GM12878 (cell line): ENCODE measurements at regions of chr17 and their contacts with region 1.

Region 1: DNA sequence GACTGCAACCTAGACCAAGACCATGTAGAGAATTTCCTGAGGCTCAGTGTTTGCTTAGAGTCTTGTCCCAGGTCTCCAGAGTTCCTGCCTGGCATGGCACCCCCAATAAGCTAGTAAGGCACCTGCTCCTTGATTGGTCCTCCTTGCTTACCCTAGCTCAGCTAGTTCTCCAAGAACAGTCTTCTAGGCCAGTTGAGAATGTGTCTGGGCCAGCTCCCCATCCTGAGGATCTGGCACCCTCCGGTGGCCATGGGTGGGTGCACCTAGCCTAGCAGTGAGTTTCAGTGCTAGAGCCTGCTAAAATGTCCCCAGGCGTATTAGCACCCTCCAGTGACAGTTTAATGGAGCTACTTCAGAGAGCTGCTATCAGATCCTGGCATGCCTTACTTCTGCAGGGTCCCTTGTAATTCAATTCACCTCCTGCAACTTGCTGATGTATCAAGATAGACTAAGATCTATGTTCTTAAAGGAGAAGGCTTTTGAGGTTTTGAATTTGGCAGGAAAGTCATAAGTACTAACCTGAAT is 44.4 kb upstream of the MED13 start:
- DNase-seq: peak; percentile 77
- ATAC-seq: peak; percentile 100
- H3K4me3 ChIP-seq: no peak overlapping the region
- H3K27ac ChIP-seq: no peak overlapping the region
- H3K4me1 ChIP-seq: peaks cover 2% of the 10 kb centered on the region; the same call in 1 of the 2 replicates
- H3K27me3 ChIP-seq: no peaks in the 10 kb centered on the region; a peak in 1 of 4 replicates
- CTCF ChIP-seq: peak; percentile 97 to 100 (median 100); a peak in 5 of 6 replicates
- EP300 ChIP-seq: no peak
- POLR2A ChIP-seq: no peak
- RAD21 ChIP-seq: peak; percentile 100

Region 2: DNA sequence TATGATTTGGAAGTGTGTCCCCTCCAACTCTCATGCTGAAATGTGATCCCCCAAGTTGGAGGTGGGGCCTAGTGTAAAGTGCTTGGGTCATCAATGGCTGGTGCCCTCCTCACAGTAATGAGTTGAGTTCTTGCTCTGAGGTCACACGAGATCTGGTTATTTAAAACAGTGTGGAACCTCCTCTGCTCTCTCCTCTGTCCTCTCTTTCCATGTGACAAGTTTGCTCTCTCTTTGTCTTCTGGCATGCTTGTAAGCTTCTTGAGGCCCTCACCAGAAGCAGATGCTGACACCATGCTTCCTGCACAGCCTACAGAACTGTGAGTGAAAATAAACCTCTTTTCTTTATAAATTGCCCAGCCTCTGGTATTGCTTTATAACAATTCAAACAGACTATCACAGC is 266.0 kb before region 1 on chr17:
- CTCF ChIA-PET with region 1: interaction called, 18 read pairs
- POLR2A ChIA-PET with region 1: no interaction called
- RAD21 ChIA-PET with region 1: interaction called, 57 read pairs
- SMC1A ChIA-PET with region 1: interaction called, 24 read pairs
- in situ Hi-C with region 1: no loop called
- intact Hi-C with region 1: no loop called
- DNase-seq: no peak
- ATAC-seq: no peak
- H3K4me3 ChIP-seq: no peak overlapping the region
- H3K27ac ChIP-seq: no peak overlapping the region
- H3K4me1 ChIP-seq: no peaks in the 10 kb centered on the region
- H3K27me3 ChIP-seq: no peaks in the 10 kb centered on the region
- CTCF ChIP-seq: no peak
- EP300 ChIP-seq: no peak
- POLR2A ChIP-seq: no peak
- RAD21 ChIP-seq: no peak

Region 3: DNA sequence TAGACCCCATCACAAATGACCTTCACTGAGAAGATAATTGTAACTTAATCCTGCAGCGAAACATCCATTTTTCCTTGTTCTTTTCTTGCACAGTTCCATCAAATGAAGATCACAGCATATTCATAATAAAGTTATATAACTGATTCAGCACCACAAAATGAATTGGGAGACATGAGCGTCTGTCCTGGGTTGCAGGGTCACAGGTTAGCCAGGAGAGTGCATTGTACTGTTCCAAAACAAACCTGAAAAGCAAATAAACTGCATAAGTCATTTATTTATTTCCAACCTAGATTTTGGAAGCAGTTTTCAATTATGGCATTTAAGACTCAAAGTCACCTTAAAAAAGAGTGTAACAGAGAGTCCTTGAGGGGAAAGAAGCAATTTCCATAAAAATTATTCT is 163.1 kb before region 1 on chr17:
- CTCF ChIA-PET with region 1: interaction called, 21 read pairs
- POLR2A ChIA-PET with region 1: interaction called, 3 read pairs
- RAD21 ChIA-PET with region 1: interaction called, 17 read pairs
- SMC1A ChIA-PET with region 1: interaction called, 28 read pairs
- in situ Hi-C with region 1: no loop called
- intact Hi-C with region 1: no loop called
- DNase-seq: no peak
- ATAC-seq: no peak
- H3K4me3 ChIP-seq: no peak overlapping the region
- H3K27ac ChIP-seq: no peak overlapping the region
- H3K4me1 ChIP-seq: no peaks in the 10 kb centered on the region
- H3K27me3 ChIP-seq: no peaks in the 10 kb centered on the region
- CTCF ChIP-seq: no peak
- EP300 ChIP-seq: no peak
- POLR2A ChIP-seq: no peak
- RAD21 ChIP-seq: no peak

Region 4: DNA sequence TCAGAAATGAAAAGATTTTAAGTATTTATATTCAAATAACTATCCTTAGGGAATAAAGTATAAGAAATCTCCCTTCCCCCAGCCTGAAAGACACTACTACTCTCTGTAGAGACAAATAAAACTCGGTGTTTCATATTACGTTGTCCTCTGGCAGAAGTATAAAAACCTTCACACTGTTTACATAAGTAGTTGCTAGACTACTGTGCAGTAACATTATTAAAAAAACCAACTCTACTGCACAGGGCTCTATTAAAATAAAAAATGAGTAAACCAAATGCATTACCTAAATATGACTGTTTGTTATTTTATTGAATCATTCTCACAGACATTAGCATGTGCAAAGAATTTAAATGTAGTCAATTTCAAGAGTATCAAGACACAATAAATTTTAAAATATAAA is 111.8 kb before region 1 on chr17:
- CTCF ChIA-PET with region 1: interaction called, 16 read pairs
- POLR2A ChIA-PET with region 1: no interaction called
- RAD21 ChIA-PET with region 1: interaction called, 19 read pairs
- SMC1A ChIA-PET with region 1: interaction called, 14 read pairs
- in situ Hi-C with region 1: no loop called
- intact Hi-C with region 1: no loop called
- DNase-seq: no peak
- ATAC-seq: no peak
- H3K4me3 ChIP-seq: no peak overlapping the region
- H3K27ac ChIP-seq: no peak overlapping the region
- H3K4me1 ChIP-seq: no peaks in the 10 kb centered on the region
- H3K27me3 ChIP-seq: no peaks in the 10 kb centered on the region
- CTCF ChIP-seq: no peak
- EP300 ChIP-seq: no peak
- POLR2A ChIP-seq: no peak
- RAD21 ChIP-seq: no peak

Region 5: GRCh38 chr17:62052757-62053338 is 56.6 kb before region 1 on chr17:
- CTCF ChIA-PET with region 1: interaction called, 105 read pairs
- POLR2A ChIA-PET with region 1: interaction called, 3 read pairs
- RAD21 ChIA-PET with region 1: interaction called, 169 read pairs
- SMC1A ChIA-PET with region 1: interaction called, 57 read pairs
- in situ Hi-C with region 1: no loop called
- intact Hi-C with region 1: no loop called
- DNase-seq: no peak
- ATAC-seq: no peak
- H3K4me3 ChIP-seq: no peak overlapping the region
- H3K27ac ChIP-seq: no peak overlapping the region
- H3K4me1 ChIP-seq: no peaks in the 10 kb centered on the region
- H3K27me3 ChIP-seq: no peaks in the 10 kb centered on the region
- CTCF ChIP-seq: no peak
- EP300 ChIP-seq: no peak
- POLR2A ChIP-seq: no peak
- RAD21 ChIP-seq: no peak

Region 6: GRCh38 chr17:62121025-62121730 is 11.7 kb after region 1 on chr17:
- CTCF ChIA-PET with region 1: interaction called, 14 read pairs
- POLR2A ChIA-PET with region 1: interaction called, 5 read pairs
- RAD21 ChIA-PET with region 1: interaction called, 10 read pairs
- SMC1A ChIA-PET with region 1: interaction called, 14 read pairs
- in situ Hi-C with region 1: no loop called
- intact Hi-C with region 1: no loop called
- DNase-seq: no peak
- ATAC-seq: no peak
- H3K4me3 ChIP-seq: no peak overlapping the region
- H3K27ac ChIP-seq: no peak overlapping the region
- H3K4me1 ChIP-seq: peaks cover 6% of the 10 kb centered on the region; the same call in 1 of the 2 replicates
- H3K27me3 ChIP-seq: no peaks in the 10 kb centered on the region
- CTCF ChIP-seq: no peak
- EP300 ChIP-seq: no peak
- POLR2A ChIP-seq: no peak
- RAD21 ChIP-seq: no peak

Region 7: GRCh38 chr17:62343764-62344270 is 234.4 kb after region 1 on chr17:
- CTCF ChIA-PET with region 1: no interaction called
- POLR2A ChIA-PET with region 1: no interaction called
- RAD21 ChIA-PET with region 1: no interaction called
- SMC1A ChIA-PET with region 1: no interaction called
- in situ Hi-C with region 1: no loop called
- intact Hi-C with region 1: no loop called
- DNase-seq: no peak
- ATAC-seq: no peak
- H3K4me3 ChIP-seq: no peak overlapping the region
- H3K27ac ChIP-seq: no peak overlapping the region
- H3K4me1 ChIP-seq: no peaks in the 10 kb centered on the region
- H3K27me3 ChIP-seq: no peaks in the 10 kb centered on the region
- CTCF ChIP-seq: no peak
- EP300 ChIP-seq: no peak
- POLR2A ChIP-seq: no peak
- RAD21 ChIP-seq: no peak